ENCODE measurements at regions of chr16 and their contacts with region 1.

Region 1: DNA sequence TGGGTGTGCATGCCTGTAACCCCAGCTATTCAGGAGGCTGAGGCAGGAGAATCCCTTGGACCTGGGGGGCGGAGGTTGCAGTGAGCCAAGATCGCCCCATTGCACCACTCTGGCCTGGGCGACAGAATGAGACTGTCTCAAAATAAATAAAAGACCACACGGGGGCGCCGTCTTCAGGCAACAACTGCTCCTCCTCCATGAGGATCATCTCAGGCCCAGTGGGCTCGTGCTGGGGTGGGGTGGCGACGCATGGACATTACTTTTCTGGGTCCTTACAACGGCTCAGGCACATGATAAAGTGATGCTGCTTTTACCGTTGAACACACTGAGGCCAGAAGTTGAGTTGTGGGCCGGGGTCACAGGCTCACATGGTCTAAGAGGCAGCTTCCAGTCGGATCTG is 56.2 kb downstream of the PRMT7 start:
- DNase-seq: peak in 5 of 9 donors; percentile 31 to 50 (median 38)
- ATAC-seq: no peak
- H3K4me3 ChIP-seq: no peak overlapping the region
- H3K4me3 Mint-ChIP-seq: peak overlapping the region in 2 of 10 donors; percentile 51 to 58
- H3K27ac ChIP-seq: no peak overlapping the region
- H3K27ac Mint-ChIP-seq: peak overlapping the region in 2 of 9 donors; percentile 3 to 70
- H3K4me1 ChIP-seq: peaks cover 23 to 51% of the 10 kb centered on the region in 2 donors
- H3K4me1 Mint-ChIP-seq: peaks cover 39 to 58% (median 48%) of the 10 kb centered on the region in 7 donors
- H3K27me3 ChIP-seq: no peaks in the 10 kb centered on the region
- H3K27me3 Mint-ChIP-seq: peaks cover 0 to 34% (median 0%) of the 10 kb centered on the region in 5 donors

Region 2: GRCh38 chr16:68356249-68356918 is 10.6 kb before region 1 on chr16:
- CTCF ChIA-PET with region 1: no interaction called
- POLR2A ChIA-PET with region 1: interaction called, 3 read pairs
- intact Hi-C with region 1: loop called in 1 of 2 experiments (anchors 1 kb)
- DNase-seq: peak; percentile 31 to 76 (median 74)
- ATAC-seq: peak; percentile 87
- H3K4me3 ChIP-seq: peak overlapping the region; percentile 54
- H3K4me3 Mint-ChIP-seq: peak overlapping the region; percentile 73 to 87 (median 82)
- H3K27ac ChIP-seq: no peak overlapping the region
- H3K27ac Mint-ChIP-seq: peak overlapping the region in 7 of 9 donors; percentile 28 to 84 (median 59)
- H3K4me1 ChIP-seq: peaks cover 25 to 34% of the 10 kb centered on the region in 2 donors
- H3K4me1 Mint-ChIP-seq: peaks cover 21 to 49% (median 42%) of the 10 kb centered on the region in 7 donors
- H3K27me3 ChIP-seq: no peaks in the 10 kb centered on the region
- H3K27me3 Mint-ChIP-seq: no peaks in the 10 kb centered on the region

Region 3: GRCh38 chr16:68512183-68512582 is 145.2 kb after region 1 on chr16:
- CTCF ChIA-PET with region 1: interaction called, 3 read pairs
- POLR2A ChIA-PET with region 1: no interaction called
- intact Hi-C with region 1: loop called in 1 of 2 experiments (anchors 1 kb)
- DNase-seq: peak in 1 of 9 donors; percentile 1
- ATAC-seq: no peak
- H3K4me3 ChIP-seq: no peak overlapping the region
- H3K4me3 Mint-ChIP-seq: peak overlapping the region in 1 of 10 donors; percentile 41
- H3K27ac ChIP-seq: no peak overlapping the region
- H3K27ac Mint-ChIP-seq: peak overlapping the region in 1 of 9 donors; percentile 10
- H3K4me1 ChIP-seq: peaks cover 0 to 3% of the 10 kb centered on the region in 2 donors
- H3K4me1 Mint-ChIP-seq: peaks cover 0 to 14% (median 3%) of the 10 kb centered on the region in 7 donors
- H3K27me3 ChIP-seq: no peaks in the 10 kb centered on the region
- H3K27me3 Mint-ChIP-seq: peaks cover 0 to 25% (median 0%) of the 10 kb centered on the region in 5 donors

Region 4: GRCh38 chr16:68538880-68539701 is 172.1 kb after region 1 on chr16 and contains the start of gene ZFP90:
- CTCF ChIA-PET with region 1: no interaction called
- POLR2A ChIA-PET with region 1: no interaction called
- intact Hi-C with region 1: no loop called
- DNase-seq: peak; percentile 82 to 91 (median 88)
- ATAC-seq: peak; percentile 94
- H3K4me3 ChIP-seq: peak within 1 kb of the TSS; percentile 66
- H3K4me3 Mint-ChIP-seq: peak within 1 kb of the TSS; percentile 86 to 99 (median 97)
- H3K27ac ChIP-seq: peak within 1 kb of the TSS; percentile 94
- H3K27ac Mint-ChIP-seq: peak within 1 kb of the TSS; percentile 97 to 100 (median 100)
- H3K4me1 ChIP-seq: peaks cover 13 to 14% of the 10 kb centered on the region in 2 donors
- H3K4me1 Mint-ChIP-seq: peaks cover 13 to 32% (median 24%) of the 10 kb centered on the region in 7 donors
- H3K27me3 ChIP-seq: no peaks in the 10 kb centered on the region
- H3K27me3 Mint-ChIP-seq: no peaks in the 10 kb centered on the region
- total RNA-seq, gene ZFP90: 25.7 to 49.4 (median 38.8) TPM

Measured in naive thymus-derived CD4-positive, alpha-beta T cell (primary cell).